ENCODE measurements at regions of chr3 and their contacts with region 1.

Region 1: DNA sequence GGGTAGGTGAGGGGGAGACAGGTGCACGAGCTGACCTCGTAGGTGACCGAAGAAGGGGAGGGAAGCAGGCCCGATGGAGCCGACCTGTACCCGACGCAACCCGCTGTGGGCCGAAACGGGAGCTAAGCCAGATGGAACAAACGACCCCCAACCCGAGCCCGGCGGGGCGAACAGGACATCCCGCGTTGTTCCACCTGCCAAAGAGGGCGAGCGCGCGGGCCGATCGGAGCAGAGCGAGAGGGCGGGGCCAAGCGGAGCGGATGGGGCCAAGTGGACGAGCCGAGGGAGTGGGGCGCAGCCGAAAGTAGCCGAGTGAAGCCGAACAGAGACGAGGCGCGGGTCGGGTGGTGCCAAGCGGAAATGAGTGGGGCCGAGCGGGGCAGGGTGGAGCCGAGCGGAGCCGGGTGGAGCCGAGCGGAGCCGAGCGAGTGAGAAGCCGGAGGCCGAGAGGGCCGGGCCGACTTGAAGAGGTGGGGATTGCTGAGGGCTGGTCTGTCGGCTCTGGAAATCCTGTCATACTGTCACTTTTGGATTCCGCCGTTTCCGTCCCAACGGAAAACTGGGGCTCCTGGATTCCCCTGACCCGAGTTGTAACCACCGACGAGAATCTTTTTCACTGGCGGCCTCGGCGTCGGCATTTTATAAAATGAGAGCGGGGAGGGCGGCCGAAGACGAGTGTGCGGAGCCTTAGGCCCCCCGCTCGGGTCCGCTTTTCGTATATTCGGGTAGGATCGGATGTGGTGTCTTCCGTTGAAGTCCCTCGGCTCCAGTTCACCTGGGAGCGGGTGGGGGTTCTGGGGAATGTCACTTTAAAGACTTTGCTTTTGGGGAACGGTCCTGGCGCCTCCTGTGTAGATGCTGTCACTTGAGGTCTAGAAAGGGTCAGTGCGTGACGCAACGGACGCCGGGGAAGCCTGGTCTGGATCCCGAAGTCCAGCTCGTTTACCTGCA is 15.6 kb upstream of the WNT7A start:
- DNase-seq: peak; percentile 99
- ATAC-seq: peak; percentile 100
- H3K4me3 Mint-ChIP-seq: peak overlapping the region; percentile 83
- H3K27ac Mint-ChIP-seq: peak overlapping the region; percentile 82
- H3K4me1 Mint-ChIP-seq: peaks cover 19% of the 10 kb centered on the region
- H3K27me3 Mint-ChIP-seq: no peaks in the 10 kb centered on the region

Region 2: DNA sequence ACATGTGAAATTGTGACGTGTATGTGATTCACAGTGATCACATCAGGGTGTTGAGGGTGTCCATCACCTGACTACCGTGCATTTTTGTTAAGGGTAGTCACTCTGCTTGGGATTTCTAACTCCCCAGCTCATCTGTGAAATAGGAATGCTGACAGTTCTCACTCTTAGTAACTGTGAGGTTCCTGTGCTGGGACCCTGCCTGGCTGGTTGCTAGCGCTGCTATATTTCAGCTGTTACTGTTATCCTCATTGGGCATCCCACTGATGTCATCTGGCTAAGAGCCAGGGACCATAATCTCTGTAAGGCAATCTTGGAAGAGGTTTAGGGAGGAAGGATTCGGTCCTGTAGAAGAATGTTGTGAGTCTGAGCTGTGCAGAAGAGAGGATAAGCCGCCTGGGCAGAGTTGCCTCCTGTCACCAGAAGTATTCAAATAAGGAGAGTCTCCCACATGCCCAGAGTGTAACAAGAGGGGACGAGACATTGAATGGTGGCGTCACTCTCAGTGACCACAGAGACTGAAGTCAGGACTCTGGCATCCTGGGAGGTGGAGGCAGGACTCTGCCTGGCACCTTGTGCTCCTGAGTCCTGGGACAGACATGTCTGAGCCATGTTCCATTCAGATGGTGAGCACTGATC is 294.4 kb before region 1 on chr3:
- CTCF ChIA-PET with region 1: no interaction called
- POLR2A ChIA-PET with region 1: no interaction called
- intact Hi-C with region 1: no loop called
- DNase-seq: no peak
- ATAC-seq: no peak
- H3K4me3 Mint-ChIP-seq: no peak overlapping the region
- H3K27ac Mint-ChIP-seq: no peak overlapping the region
- H3K4me1 Mint-ChIP-seq: no peaks in the 10 kb centered on the region
- H3K27me3 Mint-ChIP-seq: peaks cover 3% of the 10 kb centered on the region

Region 3: DNA sequence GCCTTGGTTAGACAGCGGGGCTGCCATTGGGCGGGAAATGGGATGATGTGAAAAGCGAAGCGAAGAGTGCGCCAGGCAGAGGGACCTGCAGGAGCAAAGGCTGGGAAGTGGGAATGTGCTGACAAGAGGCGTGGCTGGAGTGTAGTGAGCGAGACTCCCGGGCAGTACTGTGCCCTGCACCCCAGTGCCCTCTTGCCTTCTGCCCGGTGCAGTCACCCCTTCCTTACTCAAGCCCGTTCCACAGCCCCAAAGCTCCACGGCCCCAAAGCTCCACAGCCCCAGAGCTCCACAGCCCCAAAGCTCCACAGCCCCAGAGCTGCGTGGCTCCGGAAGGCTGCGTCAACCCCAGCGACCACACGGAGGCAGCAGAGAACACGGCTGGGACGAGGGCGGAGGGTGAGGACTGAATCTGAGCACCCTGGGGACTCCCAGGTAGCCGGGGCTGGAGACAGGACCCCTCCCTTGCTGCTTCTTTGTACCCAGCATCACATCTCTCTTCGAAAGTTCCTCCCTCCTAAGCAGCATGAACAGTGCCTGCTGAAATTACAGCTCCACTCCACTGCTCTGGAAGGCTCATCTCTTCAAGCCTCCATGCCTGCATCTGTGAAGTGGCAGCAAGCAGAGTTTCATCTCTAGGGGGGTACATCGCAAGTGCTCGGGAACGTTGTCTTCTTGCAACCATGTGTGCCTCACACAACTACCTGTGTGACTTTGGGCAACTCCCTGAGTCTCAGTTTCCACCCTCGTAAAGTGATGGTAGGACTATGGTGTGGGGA is 237.6 kb before region 1 on chr3:
- CTCF ChIA-PET with region 1: interaction called, 182 read pairs
- POLR2A ChIA-PET with region 1: no interaction called
- intact Hi-C with region 1: no loop called
- DNase-seq: peak; percentile 83
- ATAC-seq: peak; percentile 87
- H3K4me3 Mint-ChIP-seq: no peak overlapping the region
- H3K27ac Mint-ChIP-seq: no peak overlapping the region
- H3K4me1 Mint-ChIP-seq: peaks cover 18% of the 10 kb centered on the region
- H3K27me3 Mint-ChIP-seq: peaks cover 2% of the 10 kb centered on the region

Region 4: GRCh38 chr3:14113965-14114635 is 218.7 kb after region 1 on chr3:
- CTCF ChIA-PET with region 1: interaction called, 7 read pairs
- POLR2A ChIA-PET with region 1: no interaction called
- intact Hi-C with region 1: loop called in 1 of 2 experiments (anchors 1 kb)
- DNase-seq: no peak
- ATAC-seq: no peak
- H3K4me3 Mint-ChIP-seq: no peak overlapping the region
- H3K27ac Mint-ChIP-seq: no peak overlapping the region
- H3K4me1 Mint-ChIP-seq: no peaks in the 10 kb centered on the region
- H3K27me3 Mint-ChIP-seq: no peaks in the 10 kb centered on the region

Region 5: DNA sequence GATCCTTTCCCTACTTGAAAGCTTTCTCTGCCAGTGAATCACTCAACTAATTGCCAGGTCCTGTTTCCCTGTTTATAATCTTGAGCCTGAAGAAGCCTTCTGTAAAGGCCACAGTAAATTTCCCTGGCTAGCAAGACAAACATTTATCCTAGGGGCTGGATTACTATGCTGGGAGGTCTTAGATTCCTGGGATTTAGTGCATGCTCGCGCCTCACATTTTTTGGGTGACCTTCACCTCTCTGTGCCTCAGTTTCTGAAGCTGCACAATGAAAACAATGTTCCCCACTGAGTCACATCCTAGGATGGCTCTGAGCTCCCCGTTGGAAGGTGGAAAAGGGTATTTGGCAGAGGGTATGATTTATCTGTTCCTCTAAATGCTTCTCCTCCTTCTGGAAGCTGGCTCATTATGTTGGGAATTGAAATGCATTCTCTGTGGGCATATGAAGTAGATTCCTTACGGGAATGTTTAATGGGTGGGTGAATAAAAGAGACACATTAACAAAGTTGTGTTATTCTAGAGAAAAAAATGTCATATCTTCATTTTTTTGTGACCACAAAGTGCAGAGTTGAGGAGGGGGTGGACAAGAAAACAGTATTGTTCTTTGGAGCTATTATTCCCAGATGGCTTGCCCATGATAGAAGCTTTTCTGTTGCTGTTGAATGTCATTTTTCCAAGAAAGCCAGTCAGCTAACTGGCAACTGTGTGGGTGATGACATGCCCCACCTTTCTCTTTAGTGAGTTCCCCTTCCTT is 315.6 kb after region 1 on chr3:
- CTCF ChIA-PET with region 1: interaction called, 10 read pairs
- POLR2A ChIA-PET with region 1: no interaction called
- intact Hi-C with region 1: no loop called
- DNase-seq: no peak
- ATAC-seq: no peak
- H3K4me3 Mint-ChIP-seq: no peak overlapping the region
- H3K27ac Mint-ChIP-seq: no peak overlapping the region
- H3K4me1 Mint-ChIP-seq: no peaks in the 10 kb centered on the region
- H3K27me3 Mint-ChIP-seq: no peaks in the 10 kb centered on the region

Region 6: GRCh38 chr3:14431892-14432834 is 536.7 kb after region 1 on chr3:
- CTCF ChIA-PET with region 1: no interaction called
- POLR2A ChIA-PET with region 1: no interaction called
- intact Hi-C with region 1: loop called in 1 of 2 experiments (anchors 1 kb)
- DNase-seq: peak; percentile 97
- ATAC-seq: peak; percentile 88
- H3K4me3 Mint-ChIP-seq: peak overlapping the region; percentile 63
- H3K27ac Mint-ChIP-seq: peak overlapping the region; percentile 96
- H3K4me1 Mint-ChIP-seq: peaks cover 86% of the 10 kb centered on the region
- H3K27me3 Mint-ChIP-seq: no peaks in the 10 kb centered on the region